ENCODE measurements at regions of chr1 and their contacts with region 1.

Region 1: GRCh38 chr1:117059678-117060440 is at the start of gene TTF2:
- DNase-seq: peak; percentile 86
- H3K4me3 ChIP-seq: peak within 1 kb of the TSS; percentile 87
- CTCF ChIP-seq: no peak

Region 2: GRCh38 chr1:116570358-116571200 is 489.3 kb before region 1 on chr1 and contains the start of gene CD58:
- CTCF ChIA-PET with region 1: interaction called, 12 read pairs
- POLR2A ChIA-PET with region 1: no interaction called
- DNase-seq: no peak
- H3K4me3 ChIP-seq: peak within 1 kb of the TSS; percentile 73
- CTCF ChIP-seq: peak; percentile 79

Region 3: GRCh38 chr1:116724765-116725375 is 335.0 kb before region 1 on chr1:
- CTCF ChIA-PET with region 1: interaction called, 90 read pairs
- POLR2A ChIA-PET with region 1: no interaction called
- DNase-seq: no peak
- H3K4me3 ChIP-seq: no peak overlapping the region
- CTCF ChIP-seq: peak; percentile 62

Region 4: GRCh38 chr1:116737020-116737854 is 322.6 kb before region 1 on chr1:
- CTCF ChIA-PET with region 1: interaction called, 59 read pairs
- POLR2A ChIA-PET with region 1: no interaction called
- DNase-seq: no peak
- H3K4me3 ChIP-seq: no peak overlapping the region
- CTCF ChIP-seq: peak; percentile 77

Region 5: DNA sequence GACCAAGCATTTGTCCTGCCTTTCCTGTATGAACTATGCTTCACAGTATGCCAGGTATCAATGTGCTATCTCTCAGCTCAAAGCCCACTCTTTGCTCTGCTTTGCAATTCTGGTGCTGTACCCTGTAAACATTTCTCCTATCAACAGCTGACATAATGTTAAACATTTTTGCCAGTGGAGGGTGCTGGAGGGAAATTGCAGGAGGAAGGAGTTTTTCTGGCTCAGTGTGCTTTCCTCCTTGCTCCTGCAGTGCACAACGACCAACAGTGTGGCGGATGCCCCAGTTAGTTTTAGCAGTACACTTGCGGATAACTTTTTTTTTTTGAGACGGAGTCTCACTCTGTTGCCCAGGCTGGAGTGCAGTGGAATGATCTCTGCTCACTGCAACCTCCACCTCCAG is 217.2 kb before region 1 on chr1:
- CTCF ChIA-PET with region 1: interaction called, 12 read pairs
- POLR2A ChIA-PET with region 1: no interaction called
- DNase-seq: no peak
- H3K4me3 ChIP-seq: no peak overlapping the region
- CTCF ChIP-seq: peak; percentile 51

Region 6: DNA sequence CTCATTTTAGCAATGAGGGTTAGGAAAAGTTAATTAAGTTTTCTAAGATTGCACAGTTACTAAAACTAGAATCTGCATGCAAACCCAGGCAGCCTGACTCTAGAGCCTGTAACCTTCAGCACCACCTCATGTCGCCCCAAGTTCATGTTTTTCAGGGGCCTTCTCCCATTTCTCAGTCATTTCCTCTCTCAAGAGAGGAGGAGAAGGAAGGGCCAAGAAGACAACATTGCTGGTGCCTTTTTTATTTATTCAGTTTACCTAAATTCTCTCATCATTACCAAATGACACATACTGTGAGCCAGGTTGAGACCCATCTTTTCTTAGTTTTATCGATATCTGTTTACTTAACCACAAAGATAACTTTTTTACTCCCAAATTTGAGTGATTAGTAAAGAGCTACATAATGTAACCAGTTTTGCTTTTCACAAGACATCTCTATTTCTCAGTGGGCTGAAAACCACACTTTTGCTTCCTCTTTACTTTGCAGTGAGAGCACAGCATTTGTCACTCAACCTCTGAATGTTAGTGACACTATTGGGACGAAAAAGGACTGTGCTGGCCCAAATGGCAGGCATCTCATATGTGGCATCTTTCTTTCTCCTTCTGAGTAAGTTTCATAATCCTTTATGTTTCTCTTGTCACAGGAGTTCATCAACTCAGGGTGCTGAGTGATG is 58.5 kb before region 1 on chr1 and contains the start of gene CD101:
- CTCF ChIA-PET with region 1: no interaction called
- POLR2A ChIA-PET with region 1: no interaction called
- DNase-seq: no peak
- H3K4me3 ChIP-seq: no peak within 1 kb of the TSS
- CTCF ChIP-seq: no peak